Activated CD4-positive, alpha-beta memory T cell treated with anti-CD3 and anti-CD28 coated beads for 36 hours (primary cell): ENCODE measurements at regions of chr11 and their contacts with region 1.

Region 1: GRCh38 chr11:56183459-56183858 is 7.0 kb downstream of the OR5J2 start:
- DNase-seq: no peak
- H3K4me3 Mint-ChIP-seq: no peak overlapping the region
- H3K27ac Mint-ChIP-seq: no peak overlapping the region
- H3K4me1 Mint-ChIP-seq: no peaks in the 10 kb centered on the region
- H3K27me3 Mint-ChIP-seq: no peaks in the 10 kb centered on the region

Region 2: DNA sequence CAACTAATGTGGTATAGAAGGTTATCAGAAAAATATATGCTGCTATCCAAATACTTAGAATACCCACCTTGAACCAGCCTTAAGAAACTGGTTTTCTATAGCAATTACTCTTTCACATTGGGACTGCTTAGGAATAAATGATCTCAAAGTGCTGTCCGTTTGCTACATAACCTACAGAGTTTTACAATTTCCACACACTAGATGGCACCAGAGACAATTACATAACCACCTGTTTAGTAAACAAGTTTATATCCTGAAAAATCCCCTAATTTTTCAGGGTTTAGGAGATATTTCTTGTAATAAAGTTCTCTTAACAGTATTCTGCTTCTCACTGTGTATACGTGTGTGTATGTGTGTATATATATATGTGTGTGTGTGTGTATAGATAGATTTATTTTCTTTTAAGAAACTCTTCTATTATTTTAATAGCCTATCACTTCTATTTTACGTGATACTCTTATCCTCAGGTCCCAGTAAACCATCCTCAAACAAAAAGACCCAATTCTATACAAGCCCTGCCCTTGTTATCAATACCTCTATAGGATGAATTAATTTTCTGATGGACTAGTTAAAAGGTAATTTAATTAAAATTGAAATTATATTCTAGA is 240.6 kb before region 1 on chr11:
- CTCF ChIA-PET with region 1: no interaction called
- POLR2A ChIA-PET with region 1: no interaction called
- intact Hi-C with region 1: no loop called
- DNase-seq: no peak
- H3K4me3 Mint-ChIP-seq: no peak overlapping the region
- H3K27ac Mint-ChIP-seq: no peak overlapping the region
- H3K4me1 Mint-ChIP-seq: no peaks in the 10 kb centered on the region
- H3K27me3 Mint-ChIP-seq: no peaks in the 10 kb centered on the region

Region 3: GRCh38 chr11:56214537-56214936 is 31.1 kb after region 1 on chr11:
- CTCF ChIA-PET with region 1: no interaction called
- POLR2A ChIA-PET with region 1: no interaction called
- intact Hi-C with region 1: loop called (anchors 1 kb)
- DNase-seq: no peak
- H3K4me3 Mint-ChIP-seq: no peak overlapping the region
- H3K27ac Mint-ChIP-seq: no peak overlapping the region
- H3K4me1 Mint-ChIP-seq: no peaks in the 10 kb centered on the region
- H3K27me3 Mint-ChIP-seq: no peaks in the 10 kb centered on the region